ENCODE measurements at regions of chr5 and their contacts with region 1.

Region 1: DNA sequence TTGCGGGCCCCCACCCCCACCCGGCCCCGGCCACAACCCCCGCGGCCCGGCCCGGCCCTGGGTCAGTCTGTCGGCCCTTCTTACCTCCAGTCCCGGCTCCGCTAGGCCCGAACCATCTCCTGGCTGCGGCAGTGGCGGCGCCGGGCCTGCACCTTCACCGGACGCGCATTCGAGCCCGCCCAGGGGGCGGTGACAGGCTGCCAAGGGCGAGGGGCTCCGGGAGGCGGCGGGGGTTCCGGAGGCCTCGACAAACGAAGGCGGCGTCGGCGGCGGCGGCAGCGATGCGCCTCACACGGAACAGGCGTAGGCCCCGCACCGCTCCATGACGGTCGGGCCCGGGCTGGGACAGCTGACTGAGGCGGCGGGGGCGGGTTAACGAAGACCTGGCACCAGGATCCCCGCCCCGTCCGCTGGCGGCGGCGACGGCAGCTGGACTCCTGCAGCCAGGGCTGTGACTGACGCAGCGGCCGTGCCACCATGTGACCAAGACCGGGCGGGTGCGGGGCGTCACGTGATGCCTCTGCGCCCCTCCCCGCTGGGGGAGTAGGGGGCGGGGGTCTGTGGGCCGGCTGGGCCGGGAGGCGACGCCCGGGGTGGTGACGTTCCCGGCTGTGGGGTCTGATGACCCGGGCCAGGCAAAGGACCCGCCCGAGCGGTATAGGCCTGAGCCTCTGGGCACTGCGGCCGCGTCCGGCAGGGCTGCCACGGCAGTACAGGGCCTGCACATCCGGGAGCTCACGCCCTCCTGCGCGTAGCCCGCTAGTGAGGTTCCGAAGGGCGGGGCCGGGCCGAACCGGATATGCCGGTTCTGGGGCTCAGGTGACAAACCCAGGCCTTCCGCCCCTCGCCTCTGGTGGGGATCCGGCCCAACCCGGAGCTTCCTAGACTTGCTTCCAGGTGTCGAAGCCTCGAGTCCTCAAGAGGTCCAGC is at the start of gene AFF4:
- DNase-seq: peak; percentile 90
- H3K4me3 Mint-ChIP-seq: peak within 1 kb of the TSS; percentile 98
- H3K27ac Mint-ChIP-seq: peak within 1 kb of the TSS; percentile 94
- H3K4me1 Mint-ChIP-seq: peaks cover 27% of the 10 kb centered on the region
- H3K27me3 Mint-ChIP-seq: no peaks in the 10 kb centered on the region
- total RNA-seq, gene AFF4: 33.1 to 33.3 TPM

Region 2: GRCh38 chr5:132410451-132411381 is 552.7 kb before region 1 on chr5:
- CTCF ChIA-PET with region 1: no interaction called
- POLR2A ChIA-PET with region 1: no interaction called
- DNase-seq: peak; percentile 89
- H3K4me3 Mint-ChIP-seq: peak overlapping the region; percentile 95
- H3K27ac Mint-ChIP-seq: peak overlapping the region; percentile 99
- H3K4me1 Mint-ChIP-seq: peaks cover 59% of the 10 kb centered on the region
- H3K27me3 Mint-ChIP-seq: no peaks in the 10 kb centered on the region

Region 3: GRCh38 chr5:132976852-132977251 is 13.4 kb after region 1 on chr5:
- CTCF ChIA-PET with region 1: interaction called, 5 read pairs
- POLR2A ChIA-PET with region 1: interaction called, 14 read pairs
- DNase-seq: no peak
- H3K4me3 Mint-ChIP-seq: no peak overlapping the region
- H3K27ac Mint-ChIP-seq: no peak overlapping the region
- H3K4me1 Mint-ChIP-seq: no peaks in the 10 kb centered on the region
- H3K27me3 Mint-ChIP-seq: peaks cover 8% of the 10 kb centered on the region